ENCODE measurements at regions of chr2 and their contacts with region 1.

Region 1: DNA sequence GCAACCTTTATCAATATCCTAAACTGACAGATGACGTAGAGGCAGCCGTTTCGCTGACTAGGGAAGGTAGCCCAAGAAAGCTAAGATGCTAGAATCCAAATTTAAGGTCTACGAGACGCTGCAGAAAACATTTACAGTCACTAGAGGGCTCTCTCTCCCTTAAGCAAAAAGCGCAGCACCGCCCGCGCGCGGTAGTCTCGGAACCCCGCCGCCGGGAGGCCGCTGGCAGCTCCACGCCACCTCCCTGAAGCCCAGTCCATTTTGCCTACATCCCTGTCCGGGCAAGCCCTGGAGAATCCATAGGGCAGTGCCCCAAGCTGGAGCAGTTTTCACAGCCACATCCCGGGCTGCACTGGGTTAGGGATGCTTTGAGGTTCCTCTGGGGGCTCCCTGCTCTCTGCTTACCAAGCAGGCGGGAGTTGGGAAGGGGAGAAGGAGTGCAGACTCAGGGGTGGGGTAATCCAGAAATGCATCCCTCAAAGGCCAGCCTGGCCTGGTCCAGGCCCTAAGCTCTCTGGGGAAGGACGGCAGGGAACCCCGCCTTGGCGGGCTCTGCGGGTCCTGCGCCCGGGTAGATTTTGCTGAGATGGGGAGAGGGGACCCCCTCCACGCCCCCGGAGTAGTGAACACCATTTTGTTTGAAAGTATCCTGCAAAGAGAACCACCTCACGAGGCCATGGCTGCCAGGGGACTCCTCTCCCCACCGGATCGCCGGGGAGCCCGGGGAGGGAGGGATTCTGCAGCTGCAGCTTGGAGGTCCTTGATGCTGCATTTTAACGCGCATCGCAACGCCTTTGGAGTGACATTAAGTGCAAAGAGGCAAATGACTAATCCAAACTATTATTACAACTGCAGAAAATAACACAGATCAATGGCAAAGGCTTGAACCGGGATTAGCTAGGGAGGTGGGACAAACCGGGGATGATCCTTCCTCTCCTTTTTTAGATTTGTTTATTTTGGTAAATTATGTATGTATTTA is 1.3 kb upstream of the DPYSL5 start:
- DNase-seq: peak; percentile 88
- H3K4me3 ChIP-seq: peak overlapping the region in 1 of 8 donors; percentile 70
- H3K27ac ChIP-seq: no peak overlapping the region
- H3K4me1 ChIP-seq: peaks cover 35 to 46% (median 39%) of the 10 kb centered on the region in 6 donors
- H3K27me3 ChIP-seq: peaks cover 17 to 100% (median 60%) of the 10 kb centered on the region in 7 donors
- CTCF ChIP-seq: peak; percentile 32 to 76 (median 70)
- POLR2A ChIP-seq: no peak

Region 2: GRCh38 chr2:26942543-26943295 is 96.1 kb after region 1 on chr2:
- intact Hi-C with region 1: loop called (anchors 2 kb)
- DNase-seq: peak; percentile 85
- H3K4me3 ChIP-seq: no peak overlapping the region
- H3K27ac ChIP-seq: no peak overlapping the region
- H3K4me1 ChIP-seq: peaks cover 0 to 13% (median 5%) of the 10 kb centered on the region in 6 donors
- H3K27me3 ChIP-seq: peaks cover 0 to 54% (median 4%) of the 10 kb centered on the region in 7 donors
- CTCF ChIP-seq: peak; percentile 21 to 84 (median 71)
- POLR2A ChIP-seq: no peak

Region 3: DNA sequence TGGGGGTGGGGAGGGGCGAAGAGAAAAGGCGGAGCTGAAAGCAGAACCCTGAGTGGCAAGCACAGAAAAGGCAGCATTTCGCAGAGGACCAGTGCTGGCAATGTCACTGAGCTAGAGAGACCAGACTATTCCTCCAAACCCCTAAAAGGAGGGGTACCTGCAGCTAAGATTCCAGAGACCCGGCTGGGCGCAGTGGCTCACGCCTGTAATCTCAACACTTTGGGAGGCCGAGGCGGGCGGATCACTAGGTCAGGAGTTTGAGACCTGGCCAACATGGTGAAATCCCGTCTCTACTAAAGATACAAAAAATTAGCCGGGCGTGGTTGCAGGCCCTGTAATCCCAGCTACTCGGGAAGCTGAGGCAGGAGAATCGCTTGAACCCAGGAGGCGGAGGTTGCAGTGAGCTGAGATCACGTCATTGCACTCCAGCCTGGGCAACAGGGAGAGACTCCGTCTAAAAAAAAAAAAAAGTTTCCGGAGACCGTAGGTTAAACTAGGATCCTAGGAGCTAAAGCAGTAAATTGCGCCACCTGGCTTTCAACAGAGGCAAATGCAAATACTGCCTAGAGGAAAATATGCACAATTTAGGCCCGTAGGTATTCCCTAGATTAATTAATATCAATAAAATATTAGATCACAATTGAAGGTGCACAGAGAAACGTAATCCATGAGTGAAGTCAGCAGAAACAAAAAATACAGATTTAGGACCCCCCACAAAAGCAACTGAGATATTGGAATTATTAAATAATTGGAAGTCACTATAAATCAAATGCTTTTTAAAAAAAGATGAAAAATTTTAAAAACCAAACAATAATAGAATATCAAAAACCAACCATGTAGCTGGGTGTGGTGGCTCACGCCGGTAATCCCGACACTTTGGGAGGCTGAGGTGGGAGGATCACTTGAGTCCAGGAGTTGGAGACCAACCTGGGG is 456.7 kb after region 1 on chr2:
- intact Hi-C with region 1: no loop called
- DNase-seq: peak; percentile 47
- H3K4me3 ChIP-seq: peak overlapping the region in 7 of 8 donors; percentile 13 to 59 (median 25)
- H3K27ac ChIP-seq: peak overlapping the region in 5 of 8 donors; percentile 36 to 67 (median 51)
- H3K4me1 ChIP-seq: peaks cover 2 to 39% (median 25%) of the 10 kb centered on the region in 6 donors
- H3K27me3 ChIP-seq: peaks cover 3 to 39% (median 32%) of the 10 kb centered on the region in 7 donors
- CTCF ChIP-seq: peak; percentile 80 to 91 (median 86)
- POLR2A ChIP-seq: no peak